ENCODE measurements at regions of chr20 and their contacts with region 1.

Region 1: DNA sequence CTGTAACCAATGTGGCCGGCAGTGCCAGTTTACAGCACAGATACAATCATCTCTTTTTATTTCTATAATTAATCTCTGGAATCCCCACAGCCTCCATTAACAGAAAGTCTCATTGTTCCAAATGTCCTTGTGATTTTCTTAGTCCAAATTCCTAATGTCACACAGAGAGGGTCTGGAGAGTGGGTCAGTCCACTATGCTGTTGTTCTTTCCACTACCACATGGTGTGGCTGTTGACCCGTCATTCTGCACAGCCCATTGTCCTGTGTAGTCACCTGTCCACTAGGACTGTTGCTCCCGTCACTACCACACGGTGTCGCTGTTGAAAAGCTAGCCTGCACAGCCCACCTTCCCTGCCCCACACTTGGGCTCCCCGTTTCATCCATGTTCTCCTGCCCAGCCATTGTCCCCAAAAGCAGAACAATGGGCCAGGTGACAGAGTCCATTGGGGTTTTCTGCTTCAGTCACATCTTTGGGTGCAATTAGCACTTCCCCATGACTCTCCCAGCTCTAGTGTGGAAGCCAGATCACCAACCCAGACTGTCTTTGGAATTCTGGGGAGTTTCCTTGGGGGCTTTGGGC is 8.6 kb upstream of the LBP start:
- H3K4me3 ChIP-seq: no peak overlapping the region
- H3K27ac ChIP-seq: no peak overlapping the region
- H3K4me1 ChIP-seq: no peaks in the 10 kb centered on the region
- CTCF ChIP-seq: 0 out of 2 replicates have a peak, but pooled peaks have one; percentile 24

Region 2: DNA sequence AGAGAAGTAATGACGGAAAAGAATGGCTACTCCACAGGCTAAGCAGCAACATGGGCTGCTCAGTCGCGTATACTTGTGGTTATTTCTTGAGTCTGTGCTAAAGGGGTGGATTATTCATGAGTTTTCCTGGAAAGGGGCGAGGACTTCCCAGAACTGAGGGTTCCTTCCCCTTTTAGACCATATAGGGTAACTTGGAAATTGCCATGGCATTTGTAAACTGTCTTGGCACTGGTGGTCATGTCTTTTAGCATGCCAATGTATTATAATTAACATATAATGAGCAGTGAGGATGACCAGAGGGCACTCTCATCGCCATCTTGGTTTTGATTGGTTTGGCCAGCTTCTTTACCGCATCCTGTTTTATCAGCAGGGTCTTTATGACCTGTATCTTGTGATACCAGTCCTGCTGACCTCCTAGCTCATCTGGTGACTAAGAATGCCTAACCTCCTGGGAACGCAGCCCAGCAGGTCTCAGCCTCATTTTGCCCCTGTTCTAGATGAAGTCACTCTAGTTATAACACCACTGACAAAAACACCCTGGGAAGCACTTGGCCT is 20.1 kb after region 1 on chr20:
- CTCF ChIA-PET with region 1: interaction called, 21 read pairs
- POLR2A ChIA-PET with region 1: no interaction called
- H3K4me3 ChIP-seq: no peak overlapping the region
- H3K27ac ChIP-seq: no peak overlapping the region
- H3K4me1 ChIP-seq: no peaks in the 10 kb centered on the region
- CTCF ChIP-seq: no peak

Region 3: GRCh38 chr20:38406476-38406875 is 68.8 kb after region 1 on chr20:
- CTCF ChIA-PET with region 1: interaction called, 37 read pairs
- POLR2A ChIA-PET with region 1: no interaction called
- H3K4me3 ChIP-seq: no peak overlapping the region
- H3K27ac ChIP-seq: no peak overlapping the region
- H3K4me1 ChIP-seq: no peaks in the 10 kb centered on the region
- CTCF ChIP-seq: no peak

Region 4: DNA sequence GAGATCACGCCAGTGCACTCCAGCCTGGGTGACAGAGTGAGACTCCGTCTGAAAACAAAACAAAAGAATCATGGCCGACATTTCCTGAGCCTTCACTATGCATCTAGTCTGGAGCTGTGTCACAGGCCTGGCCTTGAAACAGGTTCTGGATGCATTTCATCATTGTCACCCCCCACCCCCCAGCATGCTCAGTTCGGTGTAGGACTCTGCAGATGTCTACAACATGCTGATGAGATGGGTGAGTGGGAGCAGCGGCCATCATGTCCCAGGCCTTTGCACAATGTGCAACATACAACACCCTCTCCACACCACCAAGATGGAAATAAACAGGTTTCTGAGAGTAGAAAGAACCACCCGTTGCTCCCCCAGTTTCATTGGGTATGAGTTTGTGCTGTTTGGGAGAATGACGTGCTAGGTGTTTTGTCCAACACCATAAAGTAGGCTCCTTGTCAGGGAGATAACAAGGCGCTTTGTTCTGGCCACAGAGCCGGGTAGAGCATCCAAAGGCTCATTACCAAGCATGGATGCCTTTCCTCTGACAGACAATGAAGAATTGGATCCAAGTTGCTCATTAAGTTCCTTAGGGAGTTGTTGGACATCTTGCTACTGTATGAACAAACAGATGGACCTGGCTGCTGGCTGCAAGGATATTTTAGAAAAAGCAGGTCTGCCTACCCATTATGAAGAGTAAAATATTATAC is 75.4 kb after region 1 on chr20:
- CTCF ChIA-PET with region 1: interaction called, 37 read pairs
- POLR2A ChIA-PET with region 1: no interaction called
- H3K4me3 ChIP-seq: no peak overlapping the region
- H3K27ac ChIP-seq: no peak overlapping the region
- H3K4me1 ChIP-seq: no peaks in the 10 kb centered on the region
- CTCF ChIP-seq: no peak